Activated naive CD4-positive, alpha-beta T cell treated with anti-CD3 and anti-CD28 coated beads for 36 hours (primary cell): ENCODE measurements at regions of chr17 and their contacts with region 1.

Region 1: DNA sequence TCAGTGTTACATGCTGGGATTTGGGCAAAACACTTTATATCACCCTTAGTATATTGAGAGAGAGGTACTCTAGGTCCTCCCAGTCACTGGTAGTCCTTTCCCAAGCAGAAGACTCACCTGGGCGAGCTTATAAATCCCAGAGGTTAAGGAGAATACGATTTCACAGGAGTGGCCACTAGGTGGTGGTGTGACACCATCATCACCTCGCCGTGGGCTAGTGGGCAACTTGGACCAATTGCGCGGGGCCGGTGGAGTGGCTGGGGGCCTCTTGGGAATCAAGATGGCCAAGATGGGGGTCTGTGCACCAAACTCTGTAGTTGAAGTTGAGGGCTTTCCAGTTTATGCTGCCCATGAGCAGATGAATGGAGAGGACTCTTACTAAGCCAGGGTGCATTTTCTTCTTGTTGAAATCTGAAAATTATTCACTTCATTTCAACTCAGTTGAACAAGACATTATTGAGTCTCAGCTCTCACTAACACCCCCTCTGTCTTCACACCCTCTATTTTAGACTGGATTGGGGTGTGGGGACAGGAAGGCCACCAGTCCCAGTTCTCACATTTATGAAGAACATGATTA is 38.2 kb upstream of the PIRT start:
- DNase-seq: peak; percentile 37
- H3K4me3 Mint-ChIP-seq: no peak overlapping the region
- H3K27ac Mint-ChIP-seq: no peak overlapping the region
- H3K4me1 Mint-ChIP-seq: no peaks in the 10 kb centered on the region
- H3K27me3 Mint-ChIP-seq: peaks cover 23% of the 10 kb centered on the region

Region 2: DNA sequence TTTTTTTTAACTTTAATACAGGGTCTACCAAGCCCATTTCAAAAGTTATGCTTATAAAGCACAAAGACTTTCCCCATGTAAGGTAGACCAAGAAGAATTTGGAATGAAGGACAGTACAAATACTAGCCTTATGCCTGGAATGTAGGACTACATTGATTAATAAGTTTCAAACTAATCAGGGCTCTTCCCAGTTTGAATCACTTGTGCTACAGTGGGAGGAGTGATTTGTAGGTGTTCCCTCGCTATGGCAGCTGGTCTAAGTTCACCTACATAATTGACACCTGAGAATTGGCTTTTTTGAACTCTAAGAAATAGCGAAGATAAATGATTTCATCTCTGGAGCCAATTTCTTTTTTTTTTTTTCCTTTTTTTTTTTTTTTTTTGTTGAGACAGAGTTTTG is 90.8 kb before region 1 on chr17:
- CTCF ChIA-PET with region 1: no interaction called
- intact Hi-C with region 1: no loop called
- DNase-seq: no peak
- H3K4me3 Mint-ChIP-seq: no peak overlapping the region
- H3K27ac Mint-ChIP-seq: no peak overlapping the region
- H3K4me1 Mint-ChIP-seq: no peaks in the 10 kb centered on the region
- H3K27me3 Mint-ChIP-seq: peaks cover 2% of the 10 kb centered on the region

Region 3: DNA sequence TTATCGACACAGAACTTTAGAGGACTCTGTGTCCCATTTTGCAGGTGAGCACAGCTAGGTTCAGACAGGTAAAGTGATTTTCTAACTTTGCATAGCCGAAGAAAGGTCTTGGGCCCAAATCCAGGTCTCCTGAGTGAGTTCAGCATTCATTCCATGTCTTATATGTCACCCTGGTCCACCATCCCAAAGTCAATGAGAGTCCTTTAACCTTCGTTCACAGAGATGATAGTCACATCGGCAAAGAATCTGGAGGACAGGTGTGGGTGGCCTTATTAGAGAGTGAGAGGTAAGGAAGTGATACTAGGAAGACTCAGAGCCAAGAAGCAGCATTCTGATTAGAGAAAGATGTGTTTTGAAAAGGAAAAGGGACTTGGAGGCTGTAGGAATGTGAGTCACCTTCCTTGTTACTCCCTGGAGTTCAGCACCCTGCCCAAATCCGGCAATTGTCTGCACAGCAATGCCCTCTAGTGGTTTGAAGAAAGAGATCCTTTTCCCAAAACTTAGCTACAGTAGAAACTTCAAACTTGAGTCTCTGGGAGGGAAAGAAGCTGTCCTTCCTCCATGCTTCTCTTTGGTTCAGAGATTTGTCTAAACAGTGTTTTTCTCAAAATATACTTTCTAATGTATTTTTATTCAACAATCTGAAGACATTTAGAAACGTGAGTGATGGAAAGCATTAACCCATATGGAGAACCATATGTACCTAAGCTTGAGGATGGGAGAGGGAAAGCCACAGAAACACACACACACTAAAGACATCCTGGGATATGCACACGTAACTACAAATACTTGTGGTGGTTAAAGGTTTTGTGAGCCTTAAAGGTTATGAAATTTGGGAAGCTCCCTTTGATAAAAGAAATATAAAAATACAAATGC is 268.5 kb after region 1 on chr17:
- CTCF ChIA-PET with region 1: interaction called, 21 read pairs
- intact Hi-C with region 1: loop called (anchors 1 kb)
- DNase-seq: peak; percentile 13
- H3K4me3 Mint-ChIP-seq: no peak overlapping the region
- H3K27ac Mint-ChIP-seq: no peak overlapping the region
- H3K4me1 Mint-ChIP-seq: no peaks in the 10 kb centered on the region
- H3K27me3 Mint-ChIP-seq: peaks cover 15% of the 10 kb centered on the region

Region 4: GRCh38 chr17:11644261-11645212 is 768.5 kb after region 1 on chr17:
- CTCF ChIA-PET with region 1: interaction called, 13 read pairs
- intact Hi-C with region 1: loop called (anchors 1 kb)
- DNase-seq: peak; percentile 61
- H3K4me3 Mint-ChIP-seq: no peak overlapping the region
- H3K27ac Mint-ChIP-seq: no peak overlapping the region
- H3K4me1 Mint-ChIP-seq: peaks cover 4% of the 10 kb centered on the region
- H3K27me3 Mint-ChIP-seq: peaks cover 3% of the 10 kb centered on the region

Region 5: DNA sequence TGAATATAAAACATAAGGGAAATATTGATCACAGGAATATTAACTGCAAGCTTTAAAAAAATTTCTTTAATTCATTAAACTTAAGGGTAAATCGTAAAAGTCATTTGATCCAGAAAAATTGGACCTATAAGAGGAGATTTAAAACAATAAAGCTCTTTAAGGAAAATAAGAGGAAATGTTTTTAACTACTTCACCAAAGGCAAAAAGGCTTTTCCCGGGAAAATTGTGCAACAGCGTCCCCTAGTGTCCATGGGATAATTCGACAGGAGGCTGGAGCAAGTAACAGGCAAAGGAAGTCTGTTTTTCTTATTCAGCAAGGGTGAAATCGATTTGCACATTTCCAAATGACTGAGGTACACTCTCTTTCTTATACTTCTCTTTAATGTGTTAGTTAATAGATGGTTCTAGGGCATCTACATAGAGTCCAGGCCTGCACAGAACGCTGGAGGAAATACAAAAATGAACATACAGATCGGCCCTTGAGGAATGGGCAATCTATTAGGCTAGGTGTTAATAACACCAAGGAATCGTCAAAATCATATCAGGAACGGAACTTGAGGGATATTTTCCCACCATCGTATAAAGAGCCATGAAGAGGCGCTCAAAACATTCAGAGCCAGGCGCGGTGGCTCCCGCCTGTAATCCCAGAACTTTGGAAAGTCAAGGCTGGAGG is 1059.8 kb after region 1 on chr17:
- CTCF ChIA-PET with region 1: interaction called, 3 read pairs
- intact Hi-C with region 1: loop called (anchors 2 kb)
- DNase-seq: peak; percentile 61
- H3K4me3 Mint-ChIP-seq: no peak overlapping the region
- H3K27ac Mint-ChIP-seq: no peak overlapping the region
- H3K4me1 Mint-ChIP-seq: no peaks in the 10 kb centered on the region
- H3K27me3 Mint-ChIP-seq: peaks cover 4% of the 10 kb centered on the region

Region 6: GRCh38 chr17:11986942-11987329 is 1110.9 kb after region 1 on chr17:
- CTCF ChIA-PET with region 1: no interaction called
- intact Hi-C with region 1: loop called (anchors 5 kb)
- DNase-seq: no peak
- H3K4me3 Mint-ChIP-seq: no peak overlapping the region
- H3K27ac Mint-ChIP-seq: no peak overlapping the region
- H3K4me1 Mint-ChIP-seq: peaks cover 6% of the 10 kb centered on the region
- H3K27me3 Mint-ChIP-seq: no peaks in the 10 kb centered on the region